ENCODE measurements at regions of chr3 and their contacts with region 1.

Region 1: GRCh38 chr3:58305882-58306711 is at the starts of genes HTD2 and RPP14:
- DNase-seq: peak; percentile 98
- H3K4me3 Mint-ChIP-seq: peak within 1 kb of the TSS; percentile 95
- H3K27ac Mint-ChIP-seq: peak within 1 kb of the TSS; percentile 99
- H3K4me1 Mint-ChIP-seq: peaks cover 27% of the 10 kb centered on the region
- H3K27me3 Mint-ChIP-seq: peaks cover 15% of the 10 kb centered on the region
- total RNA-seq, gene HTD2: 11.5 and 13.6 TPM in 2 replicates
- total RNA-seq, gene RPP14: 22.7 and 23.4 TPM in 2 replicates

Region 2: DNA sequence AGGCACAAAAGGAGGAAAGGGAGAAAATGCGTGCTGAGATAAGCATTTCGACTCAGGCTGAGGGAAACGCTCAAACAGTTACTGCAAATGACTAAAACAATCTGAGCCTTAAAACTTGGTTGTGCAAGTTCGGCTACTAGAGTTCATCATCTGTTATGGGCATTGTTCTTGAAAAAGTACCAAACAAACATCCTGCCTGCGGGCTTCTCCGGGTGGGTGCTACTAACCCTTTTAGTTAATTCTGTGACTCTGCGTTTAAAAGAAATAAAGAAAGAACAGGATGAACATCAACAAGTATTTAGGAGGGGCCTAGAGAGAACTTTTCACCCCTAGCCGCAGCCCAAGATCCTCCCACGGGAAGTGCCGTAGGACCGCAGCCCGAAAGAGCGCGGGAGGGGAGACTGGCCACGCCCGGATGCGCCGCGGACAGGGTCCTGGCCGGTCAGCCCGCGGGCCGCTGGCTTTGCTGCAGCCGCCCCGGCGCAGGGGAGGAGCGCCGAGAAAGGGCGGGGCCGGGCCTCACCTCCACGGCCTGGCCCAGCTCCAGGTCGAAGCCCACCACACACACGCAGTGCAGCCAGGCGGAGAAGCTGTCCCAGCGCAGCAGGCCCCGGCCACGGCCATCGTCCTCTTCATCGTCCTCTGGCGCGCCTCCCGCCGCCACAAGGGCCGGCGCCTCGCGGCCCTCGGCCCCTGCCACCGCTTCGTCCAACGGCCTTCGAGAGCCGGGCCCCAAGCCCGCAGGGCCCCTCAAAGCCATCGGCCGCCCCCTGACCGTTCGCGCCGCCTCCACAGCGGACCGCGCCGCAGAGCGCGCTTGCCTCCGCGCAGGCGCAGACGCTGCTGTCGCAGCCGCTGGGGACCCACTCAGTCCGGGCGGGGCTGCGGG is 613.6 kb before region 1 on chr3 and contains the start of gene DENND6A:
- intact Hi-C with region 1: loop called (anchors 2 kb)
- DNase-seq: peak; percentile 94
- H3K4me3 Mint-ChIP-seq: peak within 1 kb of the TSS; percentile 91
- H3K27ac Mint-ChIP-seq: peak within 1 kb of the TSS; percentile 91
- H3K4me1 Mint-ChIP-seq: peaks cover 30% of the 10 kb centered on the region
- H3K27me3 Mint-ChIP-seq: peaks cover 3% of the 10 kb centered on the region
- total RNA-seq, gene DENND6A: 23.6 and 26.2 TPM in 2 replicates

Region 3: GRCh38 chr3:58237238-58237940 is 68.7 kb before region 1 on chr3 and contains the start of gene ABHD6:
- intact Hi-C with region 1: loop called (anchors 1 kb)
- DNase-seq: peak; percentile 78
- H3K4me3 Mint-ChIP-seq: peak within 1 kb of the TSS; percentile 90
- H3K27ac Mint-ChIP-seq: peak within 1 kb of the TSS; percentile 67
- H3K4me1 Mint-ChIP-seq: peaks cover 12% of the 10 kb centered on the region
- H3K27me3 Mint-ChIP-seq: peaks cover 32% of the 10 kb centered on the region
- total RNA-seq, gene ABHD6: 9.2 and 10.1 TPM in 2 replicates

Region 4: GRCh38 chr3:58414538-58415197 is 108.6 kb after region 1 on chr3:
- intact Hi-C with region 1: loop called (anchors 1 kb)
- DNase-seq: peak; percentile 42
- H3K4me3 Mint-ChIP-seq: no peak overlapping the region
- H3K27ac Mint-ChIP-seq: no peak overlapping the region
- H3K4me1 Mint-ChIP-seq: peaks cover 12% of the 10 kb centered on the region
- H3K27me3 Mint-ChIP-seq: no peaks in the 10 kb centered on the region

Region 5: DNA sequence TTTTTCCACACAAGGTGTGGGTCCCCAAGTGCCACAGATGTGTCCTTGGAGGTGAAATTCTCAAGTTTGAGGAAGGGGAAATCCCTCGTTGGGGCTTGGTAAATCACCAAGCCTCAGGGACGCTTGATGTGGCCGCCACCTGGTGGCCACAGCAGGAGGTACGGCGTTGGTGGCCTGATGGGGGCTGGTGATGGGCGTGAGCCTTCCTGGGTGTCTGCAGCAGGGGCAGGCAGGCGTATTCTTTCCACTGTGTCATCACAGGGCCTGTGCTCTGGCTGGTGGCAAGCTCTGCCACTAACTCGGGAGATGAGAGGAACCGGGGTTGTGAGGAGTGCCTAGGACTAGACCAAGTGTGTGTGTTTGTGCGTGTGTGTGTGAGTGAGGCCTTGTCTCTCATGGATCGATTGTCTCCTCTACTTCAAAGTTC is 226.7 kb after region 1 on chr3:
- intact Hi-C with region 1: loop called (anchors 1 kb)
- DNase-seq: peak; percentile 75
- H3K4me3 Mint-ChIP-seq: no peak overlapping the region
- H3K27ac Mint-ChIP-seq: peak overlapping the region; percentile 8
- H3K4me1 Mint-ChIP-seq: peaks cover 13% of the 10 kb centered on the region
- H3K27me3 Mint-ChIP-seq: peaks cover 15% of the 10 kb centered on the region

Region 6: GRCh38 chr3:58743296-58743695 is 437.2 kb after region 1 on chr3:
- intact Hi-C with region 1: no loop called
- DNase-seq: no peak
- H3K4me3 Mint-ChIP-seq: no peak overlapping the region
- H3K27ac Mint-ChIP-seq: no peak overlapping the region
- H3K4me1 Mint-ChIP-seq: no peaks in the 10 kb centered on the region
- H3K27me3 Mint-ChIP-seq: peaks cover 10% of the 10 kb centered on the region